Activated CD4-positive, alpha-beta T cell treated with anti-CD3 and anti-CD28 coated beads, Interleukin-2, amount 10 ng/mL, durations not matched to agents 24 days and 14 days (primary cell): ENCODE measurements at regions of chr9 and their contacts with region 1.

Region 1: DNA sequence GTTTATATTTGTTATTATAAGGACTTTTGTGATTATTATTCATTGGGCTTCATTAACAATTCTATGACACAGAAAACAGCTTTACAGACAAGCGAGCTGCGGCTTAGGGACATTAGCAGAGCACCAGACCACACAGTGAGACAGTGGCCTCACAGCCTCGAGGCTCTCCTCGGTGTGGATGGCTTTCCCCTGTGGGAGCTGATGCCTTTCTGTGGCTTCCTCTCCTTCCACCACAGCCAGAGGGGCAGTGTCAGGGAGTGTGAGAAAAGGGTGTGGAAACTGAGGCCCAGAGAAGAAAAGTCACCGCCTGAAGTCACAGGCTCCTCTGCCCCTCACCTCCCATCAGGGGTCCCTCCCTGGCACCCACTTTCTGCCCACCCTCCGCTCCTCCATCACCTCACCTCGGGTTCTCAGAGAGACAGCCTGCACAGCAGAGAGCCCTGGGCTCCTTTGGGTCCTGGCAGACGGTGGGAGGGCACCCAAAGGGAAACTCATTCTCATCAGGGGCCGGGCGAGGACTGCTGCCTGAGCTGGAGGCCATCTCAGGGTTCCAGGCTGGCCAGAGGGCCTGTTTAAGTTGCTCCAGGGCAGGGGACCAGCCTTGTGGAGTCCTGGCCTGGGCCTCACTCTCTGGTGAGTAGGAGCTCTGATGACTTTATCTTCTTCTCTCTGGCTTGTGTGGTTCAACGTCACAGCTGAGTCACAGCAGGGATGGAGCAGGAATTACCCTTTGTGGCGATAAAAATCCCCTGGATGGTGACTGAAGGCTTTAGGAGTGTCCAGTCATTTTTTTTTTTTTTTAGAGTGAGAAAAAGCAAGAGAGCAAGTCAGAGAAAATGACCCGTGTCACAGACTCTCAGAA is 830 bp downstream of the TRAF1 start:
- DNase-seq: peak; percentile 92
- H3K4me3 Mint-ChIP-seq: peak overlapping the region; percentile 93
- H3K27ac Mint-ChIP-seq: peak overlapping the region; percentile 96
- H3K4me1 Mint-ChIP-seq: peaks cover 77% of the 10 kb centered on the region
- H3K27me3 Mint-ChIP-seq: no peaks in the 10 kb centered on the region

Region 2: DNA sequence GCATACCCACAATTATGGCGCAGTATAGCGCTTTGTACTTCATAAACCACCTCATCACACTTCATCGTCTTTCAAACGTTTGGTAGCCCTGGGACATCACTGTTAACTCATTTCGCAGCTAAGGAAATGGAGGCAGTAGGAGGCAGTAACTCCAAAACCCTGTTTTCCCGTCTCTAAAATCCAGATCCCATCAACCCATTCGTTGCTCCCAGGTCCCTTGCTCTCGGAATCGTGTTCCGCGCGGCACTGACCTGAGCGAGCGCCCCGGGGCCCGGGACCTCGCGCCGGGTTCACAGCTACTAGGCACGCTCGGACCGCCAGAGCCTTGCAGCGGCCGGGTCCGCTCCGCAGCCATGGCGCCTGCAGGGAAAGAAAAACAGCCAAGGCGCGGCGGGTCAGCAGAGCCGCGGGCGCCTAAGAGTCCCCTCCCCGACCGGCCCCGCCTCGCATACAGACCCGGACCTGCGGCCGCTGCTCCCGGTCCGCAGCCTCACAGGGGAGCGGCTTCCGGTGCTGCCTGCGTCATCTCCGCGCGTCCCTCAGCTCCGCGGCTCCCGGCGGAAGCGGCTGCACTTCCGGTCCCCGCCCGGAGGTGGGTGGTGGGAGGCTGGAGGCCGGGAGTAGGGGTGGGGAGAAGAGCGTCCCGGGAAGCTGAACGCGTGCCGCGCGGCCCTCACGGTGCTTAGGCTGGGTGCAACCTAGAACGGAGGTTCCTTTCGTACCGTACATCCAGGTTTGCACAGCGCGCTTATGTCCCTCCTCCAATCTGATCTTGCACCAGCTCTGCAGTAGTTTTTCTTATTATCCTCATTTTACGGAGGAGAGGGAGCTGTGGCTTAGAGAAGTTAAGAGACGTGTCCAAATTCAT is 132.6 kb before region 1 on chr9 and contains the start of gene FBXW2:
- intact Hi-C with region 1: no loop called
- DNase-seq: peak; percentile 98
- H3K4me3 Mint-ChIP-seq: peak within 1 kb of the TSS; percentile 86
- H3K27ac Mint-ChIP-seq: peak within 1 kb of the TSS; percentile 82
- H3K4me1 Mint-ChIP-seq: peaks cover 43% of the 10 kb centered on the region
- H3K27me3 Mint-ChIP-seq: no peaks in the 10 kb centered on the region
- total RNA-seq, gene FBXW2: 84.9 and 87.9 TPM in 2 replicates

Region 3: GRCh38 chr9:120892748-120893610 is 32.8 kb before region 1 on chr9:
- intact Hi-C with region 1: loop called (anchors 1 kb)
- DNase-seq: peak; percentile 90
- H3K4me3 Mint-ChIP-seq: peak overlapping the region; percentile 85
- H3K27ac Mint-ChIP-seq: peak overlapping the region; percentile 99
- H3K4me1 Mint-ChIP-seq: peaks cover 79% of the 10 kb centered on the region
- H3K27me3 Mint-ChIP-seq: no peaks in the 10 kb centered on the region

Region 4: DNA sequence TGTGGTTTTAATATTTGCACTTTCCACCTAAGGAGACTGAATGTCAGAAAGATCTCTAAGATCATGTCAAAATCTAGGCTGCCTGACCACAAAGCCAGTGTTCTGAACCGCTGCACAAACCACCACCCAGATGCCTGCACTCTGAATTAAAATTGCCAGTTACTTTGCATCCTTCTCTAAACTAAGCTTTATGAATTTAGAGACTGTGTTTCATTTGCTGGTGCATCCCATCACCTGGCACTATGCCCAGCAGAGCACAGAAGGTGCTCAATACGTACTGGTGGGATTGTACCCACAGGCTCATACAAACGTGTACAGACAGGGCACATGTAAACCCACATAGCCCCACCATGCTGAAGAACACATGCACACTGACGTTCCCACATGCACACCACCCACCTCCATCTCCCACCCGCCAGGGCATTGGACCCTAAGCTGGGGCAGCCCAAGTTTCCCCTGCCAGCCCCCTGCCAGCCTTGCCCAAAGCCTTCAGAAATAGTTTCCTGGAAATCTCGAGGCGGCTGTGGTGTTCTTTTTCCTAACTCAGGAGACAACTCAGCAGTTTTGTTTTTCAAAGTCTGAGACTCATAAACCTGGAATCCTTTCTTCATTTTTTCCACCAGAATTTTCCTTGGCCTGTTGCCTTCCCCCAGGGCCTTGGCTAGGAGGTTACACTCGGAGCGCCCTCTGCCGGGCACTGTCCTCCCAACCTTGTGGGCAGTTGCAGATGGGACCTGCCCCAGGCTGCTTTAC is 10.4 kb after region 1 on chr9:
- intact Hi-C with region 1: loop called (anchors 1 kb)
- DNase-seq: peak; percentile 96
- H3K4me3 Mint-ChIP-seq: peak overlapping the region; percentile 68
- H3K27ac Mint-ChIP-seq: peak overlapping the region; percentile 89
- H3K4me1 Mint-ChIP-seq: peaks cover 55% of the 10 kb centered on the region
- H3K27me3 Mint-ChIP-seq: peaks cover 5% of the 10 kb centered on the region

Region 5: DNA sequence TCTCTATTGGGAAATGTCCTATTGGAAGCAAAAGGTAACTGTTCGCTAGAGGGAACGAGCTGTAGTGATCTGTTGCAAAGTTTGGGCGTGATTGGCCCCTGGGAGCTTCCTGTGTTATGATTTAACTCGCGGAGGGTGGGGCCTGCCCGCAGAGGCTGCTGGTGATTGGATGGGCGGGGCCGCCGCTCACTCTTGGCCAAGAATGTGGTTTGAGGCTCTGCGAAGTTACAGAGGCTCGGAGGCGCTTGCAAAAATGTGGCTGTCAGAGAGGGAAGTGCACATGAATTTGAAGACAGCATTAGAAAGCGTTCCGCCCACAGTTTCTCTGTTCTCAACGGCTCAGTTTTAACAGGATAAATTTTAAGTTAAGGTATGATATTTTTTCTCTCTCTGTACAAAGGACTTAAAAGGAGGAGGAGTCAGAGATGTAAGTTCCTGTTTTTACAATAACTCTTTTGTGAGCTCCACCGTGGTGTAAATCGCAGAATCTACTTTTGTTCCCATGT is 195.9 kb after region 1 on chr9:
- intact Hi-C with region 1: loop called (anchors 2 kb)
- DNase-seq: peak; percentile 99
- H3K4me3 Mint-ChIP-seq: peak overlapping the region; percentile 87
- H3K27ac Mint-ChIP-seq: peak overlapping the region; percentile 89
- H3K4me1 Mint-ChIP-seq: peaks cover 40% of the 10 kb centered on the region
- H3K27me3 Mint-ChIP-seq: no peaks in the 10 kb centered on the region